ENCODE measurements at regions of chr9 and their contacts with region 1.

Region 1: DNA sequence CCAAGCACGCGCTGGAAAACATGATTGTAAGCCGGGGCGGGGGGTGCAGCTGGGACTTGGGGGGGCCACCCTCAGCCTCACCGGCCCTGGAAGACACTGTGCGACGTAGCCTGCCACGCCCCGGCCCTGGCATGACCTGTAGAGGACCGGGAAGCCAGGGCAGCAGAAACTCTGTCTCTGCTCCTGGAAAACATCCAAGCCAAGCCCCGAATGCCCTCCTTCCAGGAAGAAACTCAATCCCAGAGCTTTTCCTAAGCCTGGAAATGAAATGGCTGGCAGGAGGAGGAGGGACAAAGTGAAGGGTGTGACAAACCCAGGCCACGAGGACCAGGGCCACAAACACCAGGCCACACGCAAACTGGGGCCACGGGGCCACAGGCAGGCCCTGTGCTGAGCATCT is 55.4 kb downstream of the KCNT1 start:
- DNase-seq: no peak
- H3K4me3 ChIP-seq: no peak overlapping the region
- H3K27ac ChIP-seq: no peak overlapping the region
- H3K4me1 ChIP-seq: no peaks in the 10 kb centered on the region
- H3K27me3 ChIP-seq: peaks cover 96% of the 10 kb centered on the region
- CTCF ChIP-seq: no peak

Region 2: GRCh38 chr9:134811673-134812342 is 945.5 kb before region 1 on chr9:
- CTCF ChIA-PET with region 1: no interaction called
- POLR2A ChIA-PET with region 1: no interaction called
- intact Hi-C with region 1: no loop called
- DNase-seq: no peak
- H3K4me3 ChIP-seq: no peak overlapping the region
- H3K27ac ChIP-seq: no peak overlapping the region
- H3K4me1 ChIP-seq: no peaks in the 10 kb centered on the region
- H3K27me3 ChIP-seq: peaks cover 94% of the 10 kb centered on the region
- CTCF ChIP-seq: no peak

Region 3: DNA sequence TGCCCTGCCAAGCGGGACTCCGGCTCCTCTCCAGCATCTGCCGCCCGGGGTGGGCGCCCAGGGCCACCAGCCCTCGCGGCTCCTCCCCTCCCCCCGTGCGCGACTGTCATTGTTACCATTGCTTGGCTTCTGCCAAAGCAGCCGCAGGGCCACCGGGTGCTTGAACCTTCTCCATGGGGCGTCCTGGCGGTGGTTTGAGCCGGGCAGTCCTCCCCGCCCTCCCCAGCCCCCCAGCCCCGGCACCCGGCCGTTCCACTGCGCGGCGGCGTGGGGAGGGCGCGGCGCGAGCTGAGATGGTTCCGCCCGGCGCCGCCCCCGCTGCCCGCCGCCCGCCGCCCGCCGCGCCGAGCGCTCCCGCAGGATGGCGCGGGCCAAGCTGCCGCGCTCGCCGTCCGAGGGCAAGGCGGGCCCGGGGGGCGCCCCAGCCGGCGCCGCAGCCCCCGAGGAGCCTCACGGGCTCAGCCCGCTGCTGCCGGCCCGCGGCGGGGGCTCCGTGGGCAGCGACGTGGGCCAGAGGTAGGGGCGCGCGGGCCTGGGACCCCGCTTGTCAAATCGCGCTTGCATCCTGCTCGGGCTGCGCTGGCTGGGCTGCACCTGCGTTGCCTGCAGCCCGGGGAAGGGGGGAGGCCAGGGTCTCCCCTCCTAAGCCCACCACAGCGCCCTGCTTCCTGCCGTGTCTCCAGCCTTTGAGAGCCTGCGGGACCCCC is 20.9 kb before region 1 on chr9:
- CTCF ChIA-PET with region 1: interaction called, 20 read pairs
- POLR2A ChIA-PET with region 1: no interaction called
- intact Hi-C with region 1: no loop called
- DNase-seq: no peak
- H3K4me3 ChIP-seq: no peak overlapping the region
- H3K27ac ChIP-seq: no peak overlapping the region
- H3K4me1 ChIP-seq: no peaks in the 10 kb centered on the region
- H3K27me3 ChIP-seq: peaks cover 85% of the 10 kb centered on the region
- CTCF ChIP-seq: no peak

Region 4: GRCh38 chr9:136275655-136276429 is 518.5 kb after region 1 on chr9:
- CTCF ChIA-PET with region 1: no interaction called
- POLR2A ChIA-PET with region 1: no interaction called
- intact Hi-C with region 1: no loop called
- DNase-seq: no peak
- H3K4me3 ChIP-seq: no peak overlapping the region
- H3K27ac ChIP-seq: no peak overlapping the region
- H3K4me1 ChIP-seq: no peaks in the 10 kb centered on the region
- H3K27me3 ChIP-seq: peaks cover 85% of the 10 kb centered on the region
- CTCF ChIP-seq: no peak